ENCODE measurements at regions of chr17 and their contacts with region 1.

Region 1: DNA sequence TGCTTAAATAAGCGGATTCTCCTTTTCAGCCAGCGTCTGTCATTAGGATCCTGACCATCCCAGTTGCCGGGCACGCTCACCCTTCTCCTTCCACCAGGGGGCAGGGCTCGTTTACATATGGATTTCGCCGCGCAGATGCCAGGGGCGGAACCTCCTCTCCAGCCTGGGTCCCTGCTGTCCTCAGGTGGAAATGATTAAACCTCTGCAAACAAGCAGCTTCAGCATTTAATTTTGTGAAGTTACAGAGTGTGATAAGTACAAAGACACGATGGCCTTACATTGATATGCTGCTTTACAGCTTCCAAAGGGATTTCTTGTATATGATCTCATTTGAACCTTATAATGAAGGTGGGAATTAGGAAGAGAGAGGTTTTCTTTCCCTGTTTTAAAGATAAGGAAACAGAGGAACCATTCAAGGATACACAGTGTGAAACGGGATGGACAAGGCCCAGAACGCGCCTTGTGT is 3.9 kb upstream of the KRT28 start:
- DNase-seq: peak; percentile 84
- H3K4me3 Mint-ChIP-seq: no peak overlapping the region
- H3K27ac Mint-ChIP-seq: no peak overlapping the region
- H3K4me1 Mint-ChIP-seq: no peaks in the 10 kb centered on the region
- H3K27me3 Mint-ChIP-seq: no peaks in the 10 kb centered on the region
- CTCF ChIP-seq: peak; percentile 86

Region 2: DNA sequence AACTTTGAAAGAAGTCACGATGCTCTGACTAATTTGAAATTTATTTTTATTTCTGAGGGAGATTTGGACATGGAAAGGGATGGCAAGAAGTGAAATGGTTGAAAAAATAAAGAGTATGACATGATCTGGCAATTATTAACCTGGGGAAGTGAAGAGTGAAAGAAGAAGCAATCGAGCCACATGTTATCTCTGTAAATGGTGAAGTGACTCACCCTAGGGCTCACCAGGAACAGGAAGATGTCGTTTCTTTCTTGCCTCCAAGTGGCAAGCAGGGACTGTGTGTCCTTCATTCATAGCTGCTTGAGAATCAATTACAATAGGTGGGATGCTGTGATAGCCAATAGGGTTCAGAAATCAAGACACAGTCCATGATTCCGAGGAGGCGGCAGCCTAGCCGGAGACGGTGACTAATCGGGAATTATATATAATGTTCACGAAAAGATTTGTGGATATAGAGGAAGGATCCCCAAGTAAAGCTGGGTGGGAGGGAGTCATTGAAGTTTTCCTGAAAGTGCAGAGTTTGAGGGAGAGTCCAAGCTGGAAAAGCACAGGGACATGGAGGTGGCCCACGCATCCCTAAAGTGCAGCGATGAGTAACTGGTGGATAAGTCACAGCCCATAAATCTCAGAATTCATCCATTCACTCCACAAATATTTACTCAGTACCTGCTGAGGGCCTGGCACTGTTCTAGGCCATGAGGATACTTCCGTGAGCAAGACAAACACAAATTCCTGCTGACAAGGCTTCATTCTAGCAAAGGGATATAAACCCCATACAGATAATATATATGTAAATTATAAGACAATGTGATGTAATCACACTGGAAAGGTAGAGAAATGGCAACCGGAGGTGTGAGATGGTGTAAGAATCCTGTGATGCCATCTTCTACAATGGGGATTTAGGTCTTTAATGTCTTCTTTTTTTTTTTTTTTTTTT is 99.7 kb after region 1 on chr17:
- CTCF ChIA-PET with region 1: interaction called, 6 read pairs
- POLR2A ChIA-PET with region 1: no interaction called
- intact Hi-C with region 1: loop called (anchors 1 kb)
- DNase-seq: peak; percentile 58
- H3K4me3 Mint-ChIP-seq: no peak overlapping the region
- H3K27ac Mint-ChIP-seq: peak overlapping the region; percentile 14
- H3K4me1 Mint-ChIP-seq: peaks cover 24% of the 10 kb centered on the region
- H3K27me3 Mint-ChIP-seq: no peaks in the 10 kb centered on the region
- CTCF ChIP-seq: no peak

Region 3: DNA sequence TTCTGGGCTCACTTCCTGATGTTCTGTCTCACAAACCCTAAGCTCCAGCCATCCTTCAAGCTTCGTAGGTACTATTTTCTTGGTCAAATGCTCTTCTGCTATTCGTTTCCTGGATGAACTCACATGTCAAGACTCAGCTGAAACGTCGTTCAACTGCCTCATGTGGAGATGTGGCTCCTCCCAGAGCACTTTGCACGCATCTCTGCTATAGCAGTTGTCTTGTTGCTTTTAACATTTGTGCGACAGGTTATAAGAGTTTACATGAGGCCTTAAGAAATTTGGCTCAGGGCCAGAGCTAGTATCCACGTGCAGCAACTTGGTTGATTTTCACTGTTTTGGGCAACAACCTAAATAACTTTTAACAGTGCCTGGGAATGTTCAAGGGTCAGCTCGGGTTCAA is 183.3 kb after region 1 on chr17:
- CTCF ChIA-PET with region 1: no interaction called
- POLR2A ChIA-PET with region 1: no interaction called
- intact Hi-C with region 1: no loop called
- DNase-seq: no peak
- H3K4me3 Mint-ChIP-seq: no peak overlapping the region
- H3K27ac Mint-ChIP-seq: no peak overlapping the region
- H3K4me1 Mint-ChIP-seq: peaks cover 5% of the 10 kb centered on the region
- H3K27me3 Mint-ChIP-seq: peaks cover 26% of the 10 kb centered on the region
- CTCF ChIP-seq: no peak

Region 4: DNA sequence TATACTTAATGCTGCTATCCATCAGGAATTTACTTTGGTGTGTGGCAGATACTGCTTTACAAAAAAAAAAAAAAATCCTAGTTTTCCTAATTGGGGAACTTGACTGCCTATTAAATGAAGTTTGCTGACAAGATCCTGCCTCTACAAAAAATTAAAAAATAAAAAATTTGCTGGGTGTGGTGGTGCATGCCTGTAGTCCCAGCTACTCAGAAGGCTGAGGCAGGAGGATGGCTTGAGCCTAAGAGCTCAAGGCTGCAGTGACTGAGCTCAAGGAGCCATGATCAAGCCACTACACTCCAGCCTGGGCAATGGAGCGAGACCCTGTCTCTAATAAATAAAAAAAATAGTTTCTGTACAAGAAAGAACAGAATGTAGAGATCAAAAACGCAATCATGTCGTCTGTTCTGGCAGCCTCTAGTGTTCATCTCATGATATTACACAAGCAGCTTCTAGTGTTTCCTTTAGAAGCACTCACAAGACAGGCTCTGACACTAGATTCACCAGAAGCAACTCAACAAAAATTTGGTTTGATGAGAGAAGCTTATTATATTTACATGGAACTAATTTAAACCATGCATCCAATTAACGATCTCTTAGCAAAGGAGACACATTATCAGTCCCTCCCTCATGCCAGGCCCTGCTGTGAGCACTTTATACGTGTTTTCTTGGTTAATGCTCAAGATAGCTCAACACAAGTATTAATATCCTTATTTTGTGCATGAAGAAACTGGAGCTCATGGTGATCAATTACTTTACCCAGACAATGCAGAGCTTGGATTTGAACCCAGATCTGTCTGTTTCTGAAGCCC is 518.6 kb after region 1 on chr17:
- CTCF ChIA-PET with region 1: interaction called, 6 read pairs
- POLR2A ChIA-PET with region 1: no interaction called
- intact Hi-C with region 1: loop called (anchors 1 kb)
- DNase-seq: peak; percentile 61
- H3K4me3 Mint-ChIP-seq: no peak overlapping the region
- H3K27ac Mint-ChIP-seq: no peak overlapping the region
- H3K4me1 Mint-ChIP-seq: no peaks in the 10 kb centered on the region
- H3K27me3 Mint-ChIP-seq: no peaks in the 10 kb centered on the region
- CTCF ChIP-seq: peak; percentile 76

Region 5: GRCh38 chr17:41329281-41329948 is 525.8 kb after region 1 on chr17:
- CTCF ChIA-PET with region 1: interaction called, 3 read pairs
- POLR2A ChIA-PET with region 1: no interaction called
- intact Hi-C with region 1: loop called (anchors 1 kb)
- DNase-seq: peak; percentile 62
- H3K4me3 Mint-ChIP-seq: no peak overlapping the region
- H3K27ac Mint-ChIP-seq: no peak overlapping the region
- H3K4me1 Mint-ChIP-seq: no peaks in the 10 kb centered on the region
- H3K27me3 Mint-ChIP-seq: no peaks in the 10 kb centered on the region
- CTCF ChIP-seq: peak; percentile 69

Region 6: GRCh38 chr17:41496820-41497408 is 693.3 kb after region 1 on chr17:
- CTCF ChIA-PET with region 1: no interaction called
- POLR2A ChIA-PET with region 1: no interaction called
- intact Hi-C with region 1: loop called (anchors 2 kb)
- DNase-seq: peak; percentile 94
- H3K4me3 Mint-ChIP-seq: no peak overlapping the region
- H3K27ac Mint-ChIP-seq: peak overlapping the region; percentile 68
- H3K4me1 Mint-ChIP-seq: peaks cover 25% of the 10 kb centered on the region
- H3K27me3 Mint-ChIP-seq: no peaks in the 10 kb centered on the region
- CTCF ChIP-seq: peak; percentile 88

Measured in MCF 10A (cell line).